ENCODE measurements at regions of chr18 and their contacts with region 1.

Region 1: GRCh38 chr18:53380063-53380639 is 844.3 kb downstream of the MBD2 start:
- DNase-seq: peak; percentile 3
- ATAC-seq: peak; percentile 86
- H3K4me3 ChIP-seq: no peak overlapping the region
- H3K27ac ChIP-seq: no peak overlapping the region
- H3K4me1 ChIP-seq: no peaks in the 10 kb centered on the region
- H3K27me3 ChIP-seq: no peaks in the 10 kb centered on the region
- CTCF ChIP-seq: peak; percentile 51 to 62 (median 52); a peak in 5 of 6 replicates
- EP300 ChIP-seq: no peak
- POLR2A ChIP-seq: no peak
- RAD21 ChIP-seq: peak; percentile 48

Region 2: GRCh38 chr18:51614033-51614432 is 1766.1 kb before region 1 on chr18:
- CTCF ChIA-PET with region 1: no interaction called
- POLR2A ChIA-PET with region 1: no interaction called
- RAD21 ChIA-PET with region 1: no interaction called
- SMC1A ChIA-PET with region 1: no interaction called
- in situ Hi-C with region 1: no loop called
- intact Hi-C with region 1: loop called (anchors 10 kb)
- DNase-seq: no peak
- ATAC-seq: no peak
- H3K4me3 ChIP-seq: no peak overlapping the region
- H3K27ac ChIP-seq: no peak overlapping the region
- H3K4me1 ChIP-seq: no peaks in the 10 kb centered on the region
- H3K27me3 ChIP-seq: no peaks in the 10 kb centered on the region
- CTCF ChIP-seq: no peak
- EP300 ChIP-seq: no peak
- POLR2A ChIP-seq: no peak
- RAD21 ChIP-seq: no peak

Region 3: GRCh38 chr18:53319628-53320027 is 60.5 kb before region 1 on chr18:
- CTCF ChIA-PET with region 1: no interaction called
- POLR2A ChIA-PET with region 1: no interaction called
- RAD21 ChIA-PET with region 1: no interaction called
- SMC1A ChIA-PET with region 1: no interaction called
- in situ Hi-C with region 1: no loop called
- intact Hi-C with region 1: loop called (anchors 10 kb)
- DNase-seq: no peak
- ATAC-seq: no peak
- H3K4me3 ChIP-seq: no peak overlapping the region
- H3K27ac ChIP-seq: no peak overlapping the region
- H3K4me1 ChIP-seq: no peaks in the 10 kb centered on the region
- H3K27me3 ChIP-seq: no peaks in the 10 kb centered on the region
- CTCF ChIP-seq: no peak
- EP300 ChIP-seq: no peak
- POLR2A ChIP-seq: no peak
- RAD21 ChIP-seq: no peak